ENCODE measurements at regions of chr11 and their contacts with region 1.

Region 1: DNA sequence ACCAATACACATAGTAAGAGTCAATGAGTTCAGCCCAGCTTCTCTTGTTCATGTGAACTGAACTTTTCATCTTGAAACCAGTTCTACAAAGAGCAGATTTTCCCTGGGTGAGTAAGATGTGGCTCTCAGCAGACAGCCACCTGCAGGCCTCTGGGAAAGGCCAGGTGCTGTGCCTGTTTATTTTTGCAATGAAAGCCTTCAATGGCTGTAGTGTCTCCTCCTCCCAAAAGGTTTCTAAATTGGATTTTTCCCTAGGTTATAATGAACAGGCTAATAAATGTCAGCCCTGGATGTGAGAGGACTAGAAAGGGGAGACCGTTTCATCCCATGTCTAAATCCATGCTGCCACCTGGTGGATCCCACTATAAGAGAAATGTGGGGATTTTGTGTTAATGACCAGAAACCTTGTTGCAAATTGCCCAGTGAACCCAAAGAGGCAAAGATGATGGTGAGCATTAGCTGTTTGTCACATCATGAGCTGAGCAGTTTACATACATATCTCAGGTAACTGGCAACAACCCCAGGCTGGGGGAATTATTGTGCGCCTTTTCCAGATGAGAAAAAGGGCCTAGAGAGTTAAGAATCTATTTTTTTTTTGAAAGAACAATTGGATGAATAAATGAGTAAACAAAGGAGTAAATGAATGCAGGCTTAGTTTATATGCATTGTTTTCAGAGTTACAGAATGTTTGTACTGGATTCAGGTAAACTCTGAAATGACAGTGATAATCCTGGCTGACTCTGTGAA is 12.7 kb downstream of the C11orf91 start:
- DNase-seq: peak in 1 of 2 donors; percentile 70
- ATAC-seq: no peak
- H3K4me3 ChIP-seq: no peak overlapping the region
- H3K27ac ChIP-seq: peak overlapping the region in 2 of 10 donors; percentile 84 to 94
- H3K4me1 ChIP-seq: peaks cover 16 to 52% (median 38%) of the 10 kb centered on the region in 9 donors
- H3K27me3 ChIP-seq: no peaks in the 10 kb centered on the region
- CTCF ChIP-seq: peak; percentile 66 to 85 (median 76)

Region 2: DNA sequence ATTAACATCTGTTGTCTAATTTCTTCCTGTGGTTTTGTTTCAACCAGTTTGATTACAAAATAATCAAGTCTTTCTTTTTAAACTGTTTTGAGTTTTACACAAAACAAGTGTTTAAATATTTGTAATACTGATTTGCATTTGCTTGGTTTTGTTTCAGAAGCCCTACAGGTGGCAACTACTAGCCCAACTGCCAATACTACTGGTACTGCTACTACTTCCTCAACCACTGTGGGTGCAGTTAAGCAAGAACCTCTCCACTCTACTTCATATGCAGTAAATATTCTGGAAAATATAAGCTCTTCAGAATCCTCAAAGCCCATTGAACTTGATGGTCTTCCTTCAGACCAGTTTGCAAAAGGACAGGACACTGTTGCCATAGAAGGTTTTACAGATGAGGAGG is 734.2 kb before region 1 on chr11:
- intact Hi-C with region 1: loop called in 1 of 10 experiments (anchors 10 kb)
- DNase-seq: no peak
- ATAC-seq: no peak
- H3K4me3 ChIP-seq: no peak overlapping the region
- H3K27ac ChIP-seq: no peak overlapping the region
- H3K4me1 ChIP-seq: peaks cover 0 to 10% (median 0%) of the 10 kb centered on the region in 9 donors
- H3K27me3 ChIP-seq: no peaks in the 10 kb centered on the region
- CTCF ChIP-seq: no peak

Region 3: GRCh38 chr11:33172996-33173395 is 514.9 kb before region 1 on chr11:
- intact Hi-C with region 1: loop called in 8 of 10 experiments (anchors 5 to 10 kb)
- DNase-seq: no peak
- ATAC-seq: peak in 3 of 8 donors; percentile 40 to 89 (median 47)
- H3K4me3 ChIP-seq: no peak overlapping the region
- H3K27ac ChIP-seq: no peak overlapping the region
- H3K4me1 ChIP-seq: peaks cover 0 to 9% (median 3%) of the 10 kb centered on the region in 9 donors
- H3K27me3 ChIP-seq: no peaks in the 10 kb centered on the region
- CTCF ChIP-seq: no peak

Region 4: DNA sequence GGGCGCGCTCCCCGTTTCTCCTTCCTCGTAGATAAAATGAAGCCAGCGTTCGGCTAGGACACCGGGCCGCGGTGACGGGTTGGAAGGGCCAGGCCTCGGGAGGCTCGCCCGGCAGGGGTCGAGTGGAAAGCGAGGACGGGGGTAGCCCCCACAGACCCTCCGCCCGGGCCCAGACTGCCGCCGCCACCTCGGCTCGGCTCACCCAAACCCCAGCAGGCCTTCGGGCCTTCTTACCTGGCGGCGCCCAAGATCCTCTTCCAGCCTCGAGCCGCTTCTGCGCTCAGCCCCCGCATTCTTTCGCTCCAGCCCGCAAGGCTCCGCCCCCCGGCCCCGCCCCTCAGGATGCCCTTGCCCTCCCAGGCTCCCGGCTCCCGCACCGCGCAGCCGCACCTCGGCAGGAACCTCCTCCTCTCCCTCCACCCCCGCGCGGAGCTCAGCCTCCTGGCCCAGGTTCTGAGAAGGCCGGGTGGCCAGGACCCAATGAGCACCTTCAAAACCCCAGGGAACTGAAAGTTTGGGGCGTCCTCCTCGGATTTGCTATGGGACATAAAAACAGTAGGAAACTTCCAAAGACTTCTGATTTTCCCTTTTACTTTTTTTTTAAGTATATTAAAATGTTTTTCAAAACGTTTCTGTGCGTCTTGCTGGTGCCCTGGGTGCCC is 48.4 kb after region 1 on chr11 and contains the start of gene CD59:
- intact Hi-C with region 1: loop called in 6 of 10 experiments (anchors 2 to 5 kb)
- DNase-seq: peak; percentile 98
- ATAC-seq: peak; percentile 96 to 97 (median 96)
- H3K4me3 ChIP-seq: peak within 1 kb of the TSS; percentile 66 to 100 (median 84)
- H3K27ac ChIP-seq: peak within 1 kb of the TSS; percentile 94 to 100 (median 96)
- H3K4me1 ChIP-seq: peaks cover 9 to 52% (median 45%) of the 10 kb centered on the region in 9 donors
- H3K27me3 ChIP-seq: no peaks in the 10 kb centered on the region
- CTCF ChIP-seq: no peak
- total RNA-seq, gene CD59: 676 to 1,261 (median 764) TPM

Region 5: GRCh38 chr11:33829433-33830141 is 141.7 kb after region 1 on chr11:
- intact Hi-C with region 1: loop called in 1 of 10 experiments (anchors 5 kb)
- DNase-seq: peak; percentile 24 to 57
- ATAC-seq: peak; percentile 76 to 89 (median 85)
- H3K4me3 ChIP-seq: peak overlapping the region; percentile 19 to 61 (median 48)
- H3K27ac ChIP-seq: no peak overlapping the region
- H3K4me1 ChIP-seq: peaks cover 4 to 12% (median 9%) of the 10 kb centered on the region in 9 donors
- H3K27me3 ChIP-seq: peaks cover 0 to 47% (median 32%) of the 10 kb centered on the region in 7 donors
- CTCF ChIP-seq: peak; percentile 61 to 84 (median 76)